ENCODE measurements at regions of chr17 and their contacts with region 1.

Region 1: GRCh38 chr17:14926526-14927122 is 338.5 kb downstream of the PMP22 start:
- DNase-seq: peak; percentile 85
- H3K4me3 ChIP-seq: no peak overlapping the region
- H3K27ac ChIP-seq: no peak overlapping the region
- H3K4me1 ChIP-seq: no peaks in the 10 kb centered on the region
- H3K27me3 ChIP-seq: no peaks in the 10 kb centered on the region

Region 2: GRCh38 chr17:13024526-13025257 is 1901.9 kb before region 1 on chr17:
- in situ Hi-C with region 1: loop called (anchors 25 kb)
- DNase-seq: peak; percentile 74
- H3K4me3 ChIP-seq: peak overlapping the region; percentile 53
- H3K27ac ChIP-seq: no peak overlapping the region
- H3K4me1 ChIP-seq: no peaks in the 10 kb centered on the region
- H3K27me3 ChIP-seq: no peaks in the 10 kb centered on the region

Region 3: GRCh38 chr17:13337864-13338371 is 1588.7 kb before region 1 on chr17:
- in situ Hi-C with region 1: loop called (anchors 25 kb)
- DNase-seq: peak; percentile 84
- H3K4me3 ChIP-seq: peak overlapping the region; percentile 75
- H3K27ac ChIP-seq: peak overlapping the region; percentile 53
- H3K4me1 ChIP-seq: peaks cover 23% of the 10 kb centered on the region
- H3K27me3 ChIP-seq: no peaks in the 10 kb centered on the region

Region 4: DNA sequence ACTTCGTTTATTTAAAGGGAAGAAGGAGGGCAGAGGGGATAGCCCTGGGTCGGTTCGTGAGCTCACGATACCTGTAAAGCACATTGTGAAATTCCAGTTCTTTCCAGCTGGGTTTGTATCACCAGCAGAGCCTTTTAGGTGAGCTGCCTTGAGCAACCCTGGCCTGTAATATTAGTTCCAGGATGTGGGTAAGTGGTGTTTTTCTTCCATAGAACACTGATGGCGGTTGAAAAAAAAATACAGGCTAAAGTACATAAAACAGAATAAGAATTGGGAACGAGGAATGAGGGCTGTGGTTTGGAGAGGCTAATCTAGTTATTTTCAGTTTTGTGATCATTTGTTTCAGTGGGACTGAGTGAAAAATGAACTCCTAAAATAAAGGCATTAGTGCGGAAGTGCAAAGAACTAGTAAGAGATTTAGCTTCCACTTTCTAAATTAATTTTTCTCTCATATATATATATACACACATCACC is 605.1 kb before region 1 on chr17:
- in situ Hi-C with region 1: loop called (anchors 10 kb)
- DNase-seq: no peak
- H3K4me3 ChIP-seq: no peak overlapping the region
- H3K27ac ChIP-seq: no peak overlapping the region
- H3K4me1 ChIP-seq: peaks cover 16% of the 10 kb centered on the region
- H3K27me3 ChIP-seq: no peaks in the 10 kb centered on the region

Region 5: DNA sequence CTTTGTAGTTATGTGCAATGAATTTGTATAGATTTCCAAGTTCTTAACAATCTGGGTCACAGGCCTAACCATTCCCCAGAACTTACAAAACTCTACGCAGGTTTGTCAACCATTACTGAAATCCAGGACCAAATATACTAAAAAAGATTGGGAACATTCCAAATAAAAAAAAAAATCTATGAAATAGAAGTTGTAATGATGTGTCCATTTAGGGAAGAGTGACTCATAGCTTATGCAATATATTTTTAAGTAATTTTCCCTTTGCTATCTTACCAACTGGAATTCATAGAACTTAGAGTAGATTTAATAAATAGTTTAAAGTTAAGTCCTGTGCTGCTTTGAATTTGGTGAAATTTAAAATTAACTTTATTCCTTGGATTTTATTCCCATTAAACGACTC is 54.7 kb before region 1 on chr17:
- in situ Hi-C with region 1: no loop called
- DNase-seq: peak; percentile 65
- H3K4me3 ChIP-seq: no peak overlapping the region
- H3K27ac ChIP-seq: no peak overlapping the region
- H3K4me1 ChIP-seq: no peaks in the 10 kb centered on the region
- H3K27me3 ChIP-seq: no peaks in the 10 kb centered on the region

Region 6: DNA sequence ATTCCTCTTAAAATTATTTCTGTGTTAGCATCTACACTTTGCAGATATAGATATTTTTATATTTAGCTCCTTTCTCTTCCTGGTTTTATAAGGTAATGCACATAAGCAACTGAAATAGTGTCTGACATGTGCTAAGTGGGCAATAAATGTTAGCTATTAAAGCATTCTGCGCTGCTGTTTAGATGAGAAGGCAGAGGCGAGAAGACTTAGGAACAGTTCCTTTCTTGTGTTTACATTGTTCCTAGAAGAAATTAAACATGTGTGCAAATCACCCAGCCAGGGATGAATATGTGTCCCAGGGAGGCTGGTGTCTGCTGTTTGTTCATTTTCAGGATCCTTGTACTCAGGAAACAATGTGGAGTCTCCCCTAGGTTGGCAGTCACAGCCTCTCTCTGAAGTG is 46.2 kb after region 1 on chr17:
- in situ Hi-C with region 1: no loop called
- DNase-seq: no peak
- H3K4me3 ChIP-seq: no peak overlapping the region
- H3K27ac ChIP-seq: no peak overlapping the region
- H3K4me1 ChIP-seq: no peaks in the 10 kb centered on the region
- H3K27me3 ChIP-seq: peaks cover 14% of the 10 kb centered on the region; the same call in 1 of the 2 replicates

Region 7: GRCh38 chr17:15171167-15172047 is 244.8 kb after region 1 on chr17:
- in situ Hi-C with region 1: loop called (anchors 25 kb)
- DNase-seq: peak; percentile 87
- H3K4me3 ChIP-seq: no peak overlapping the region
- H3K27ac ChIP-seq: no peak overlapping the region
- H3K4me1 ChIP-seq: peaks cover 14% of the 10 kb centered on the region
- H3K27me3 ChIP-seq: peaks cover 4% of the 10 kb centered on the region; the same call in 1 of the 2 replicates

Region 8: DNA sequence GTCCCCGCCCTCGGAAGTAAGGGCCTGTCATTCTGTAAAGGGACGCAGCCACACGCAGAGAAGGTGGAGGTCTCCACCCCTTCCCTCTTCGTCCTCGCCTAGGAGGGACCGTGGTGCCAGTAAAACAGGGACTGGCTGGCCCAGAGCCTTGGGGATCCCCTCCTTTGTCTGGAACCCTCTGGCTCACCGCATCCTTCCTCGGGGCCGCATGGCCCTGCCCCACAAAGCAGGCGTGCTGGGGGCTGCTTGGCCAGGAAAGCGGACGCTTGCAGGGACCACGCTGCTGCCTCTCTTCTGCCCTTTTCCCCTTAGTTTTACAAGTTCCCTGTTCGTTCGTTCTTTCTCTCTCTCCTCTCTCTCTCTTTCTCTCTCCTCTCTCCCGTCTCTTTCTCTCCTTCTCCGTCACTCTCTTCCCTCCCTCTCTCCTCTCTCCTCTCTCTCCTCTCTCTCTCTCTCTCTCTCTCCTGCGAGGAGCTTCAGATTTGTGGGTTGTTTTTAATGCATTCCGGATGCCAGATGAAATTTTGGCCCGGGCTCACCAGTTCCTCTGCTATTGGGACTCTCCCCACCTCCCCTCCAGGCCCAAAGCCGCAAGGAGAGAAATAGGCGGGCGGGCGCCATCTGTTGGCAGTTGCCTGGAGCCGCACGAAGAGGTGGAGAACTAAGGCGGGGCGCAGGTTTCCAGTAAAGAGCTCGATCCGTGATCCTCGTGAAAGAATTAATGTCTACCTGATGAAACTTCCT is 575.9 kb after region 1 on chr17:
- in situ Hi-C with region 1: loop called (anchors 25 kb)
- DNase-seq: peak; percentile 97
- H3K4me3 ChIP-seq: peak overlapping the region; percentile 54
- H3K27ac ChIP-seq: peak overlapping the region; percentile 27
- H3K4me1 ChIP-seq: peaks cover 9% of the 10 kb centered on the region; the same call in 1 of the 2 replicates
- H3K27me3 ChIP-seq: no peaks in the 10 kb centered on the region

Measured in GM23248 (cell line).